ENCODE measurements at regions of chr10 and their contacts with region 1.

Region 1: DNA sequence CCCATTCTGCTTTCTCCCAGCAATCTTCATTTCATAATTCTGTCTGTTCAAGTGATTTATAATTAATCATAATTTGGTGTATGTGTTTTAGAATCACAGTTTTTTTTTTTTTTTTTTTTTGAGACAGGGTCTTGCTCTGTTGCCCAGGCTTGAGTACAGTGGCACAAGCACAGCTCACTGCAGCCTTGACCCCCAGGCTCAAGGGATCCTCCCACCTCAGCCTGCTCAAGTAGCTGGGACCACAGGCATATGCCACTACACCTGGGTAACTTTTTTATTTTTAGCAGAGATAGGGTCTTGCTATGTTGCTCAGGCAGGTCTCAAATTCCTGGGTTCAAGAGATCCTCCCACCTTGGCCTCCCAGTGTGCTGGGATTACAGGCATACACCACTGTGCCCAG is 49.2 kb upstream of the PLA2G12B start:
- DNase-seq: no peak
- ATAC-seq: no peak
- H3K4me3 ChIP-seq: no peak overlapping the region
- H3K27ac ChIP-seq: no peak overlapping the region
- H3K4me1 ChIP-seq: peaks cover 3% of the 10 kb centered on the region
- H3K27me3 ChIP-seq: no peaks in the 10 kb centered on the region
- CTCF ChIP-seq: no peak
- POLR2A ChIP-seq: no peak
- RAD21 ChIP-seq: no peak

Region 2: DNA sequence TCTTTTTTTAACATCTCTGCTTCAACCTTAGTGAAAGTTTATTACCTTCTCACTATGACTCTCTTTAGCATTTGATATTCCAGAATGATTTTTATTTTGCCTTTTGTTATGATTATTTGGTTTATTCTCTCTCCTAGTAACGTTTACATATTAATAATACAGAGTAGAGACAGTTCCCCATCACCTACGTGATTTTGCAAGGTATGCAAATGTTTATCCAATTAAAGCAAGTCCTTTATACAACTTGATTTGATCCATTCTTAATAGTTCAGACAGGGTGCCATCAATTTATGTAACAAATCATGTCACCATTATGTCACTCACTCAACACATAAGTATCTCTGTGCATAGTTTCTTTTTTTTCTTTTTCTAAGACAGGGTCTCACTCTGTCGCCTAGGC is 137.8 kb after region 1 on chr10:
- CTCF ChIA-PET with region 1: no interaction called
- POLR2A ChIA-PET with region 1: no interaction called
- dilution Hi-C with region 1: no loop called
- in situ Hi-C with region 1: no loop called
- intact Hi-C with region 1: loop called (anchors 10 kb)
- DNase-seq: no peak
- ATAC-seq: no peak
- H3K4me3 ChIP-seq: no peak overlapping the region
- H3K27ac ChIP-seq: no peak overlapping the region
- H3K4me1 ChIP-seq: no peaks in the 10 kb centered on the region
- H3K27me3 ChIP-seq: no peaks in the 10 kb centered on the region
- CTCF ChIP-seq: no peak
- POLR2A ChIP-seq: no peak
- RAD21 ChIP-seq: no peak